Naive thymus-derived CD4-positive, alpha-beta T cell (primary cell): ENCODE measurements at regions of chr1 and their contacts with region 1.

Region 1: GRCh38 chr1:162056043-162056442 is 13.4 kb upstream of the NOS1AP start:
- DNase-seq: peak in 7 of 9 donors; percentile 12 to 44 (median 35)
- ATAC-seq: peak; percentile 87
- H3K4me3 ChIP-seq: no peak overlapping the region
- H3K4me3 Mint-ChIP-seq: no peak overlapping the region
- H3K27ac ChIP-seq: no peak overlapping the region
- H3K27ac Mint-ChIP-seq: no peak overlapping the region
- H3K4me1 ChIP-seq: no peaks in the 10 kb centered on the region
- H3K4me1 Mint-ChIP-seq: no peaks in the 10 kb centered on the region
- H3K27me3 ChIP-seq: no peaks in the 10 kb centered on the region
- H3K27me3 Mint-ChIP-seq: peaks cover 7 to 22% (median 14%) of the 10 kb centered on the region in 5 donors

Region 2: DNA sequence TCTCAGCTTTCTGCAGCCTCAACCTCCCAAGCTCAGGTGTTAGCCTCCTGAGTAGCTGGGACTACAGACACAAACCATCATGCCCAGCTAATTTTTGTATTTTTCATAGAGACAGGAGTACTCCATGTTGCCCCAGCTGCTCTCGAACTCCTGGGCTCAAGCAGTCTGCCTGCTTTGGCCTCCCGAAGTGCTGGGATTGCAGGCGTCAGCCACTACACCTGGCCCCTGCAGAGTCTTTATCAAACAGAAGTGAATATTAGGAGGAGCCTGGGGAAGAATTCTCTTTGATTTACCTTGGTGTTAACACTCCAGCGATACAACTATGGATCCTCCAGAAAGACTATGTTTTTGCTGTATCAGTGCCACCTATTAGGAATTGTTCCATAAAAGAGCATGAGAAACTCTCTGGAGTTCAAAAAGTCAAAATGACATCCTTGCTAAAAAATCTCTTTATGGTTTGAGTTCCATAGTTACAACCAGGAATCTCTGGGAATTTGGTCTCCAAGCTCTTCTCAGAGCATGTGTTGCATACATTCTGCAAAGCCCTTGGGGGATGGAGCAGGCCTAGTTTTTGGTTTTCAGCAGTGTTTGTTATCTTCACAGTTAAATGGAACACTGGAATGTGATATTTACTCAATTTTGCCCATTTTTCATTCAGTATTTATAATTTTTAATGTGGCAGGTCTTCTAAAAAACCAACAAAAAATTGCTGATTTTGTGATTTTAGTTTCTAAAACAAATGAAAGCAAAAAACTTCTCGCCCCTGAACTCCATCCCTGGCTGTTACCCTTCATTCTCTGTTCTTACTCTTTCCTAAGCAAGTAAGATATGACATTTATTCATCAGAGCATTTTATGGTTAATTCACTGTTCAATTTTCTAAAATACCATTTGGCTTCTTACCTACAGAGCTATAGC is 109.7 kb before region 1 on chr1:
- CTCF ChIA-PET with region 1: no interaction called
- POLR2A ChIA-PET with region 1: no interaction called
- intact Hi-C with region 1: no loop called
- DNase-seq: no peak
- ATAC-seq: no peak
- H3K4me3 ChIP-seq: no peak overlapping the region
- H3K4me3 Mint-ChIP-seq: no peak overlapping the region
- H3K27ac ChIP-seq: no peak overlapping the region
- H3K27ac Mint-ChIP-seq: no peak overlapping the region
- H3K4me1 ChIP-seq: no peaks in the 10 kb centered on the region
- H3K4me1 Mint-ChIP-seq: peaks cover 0 to 55% (median 23%) of the 10 kb centered on the region in 7 donors
- H3K27me3 ChIP-seq: no peaks in the 10 kb centered on the region
- H3K27me3 Mint-ChIP-seq: no peaks in the 10 kb centered on the region

Region 3: GRCh38 chr1:162276493-162276892 is 220.4 kb after region 1 on chr1:
- CTCF ChIA-PET with region 1: no interaction called
- POLR2A ChIA-PET with region 1: no interaction called
- intact Hi-C with region 1: loop called (anchors 1 to 2 kb)
- DNase-seq: no peak
- ATAC-seq: no peak
- H3K4me3 ChIP-seq: no peak overlapping the region
- H3K4me3 Mint-ChIP-seq: no peak overlapping the region
- H3K27ac ChIP-seq: no peak overlapping the region
- H3K27ac Mint-ChIP-seq: no peak overlapping the region
- H3K4me1 ChIP-seq: no peaks in the 10 kb centered on the region
- H3K4me1 Mint-ChIP-seq: no peaks in the 10 kb centered on the region
- H3K27me3 ChIP-seq: peaks cover 0 to 5% of the 10 kb centered on the region in 2 donors
- H3K27me3 Mint-ChIP-seq: peaks cover 12 to 46% (median 21%) of the 10 kb centered on the region in 5 donors

Region 4: DNA sequence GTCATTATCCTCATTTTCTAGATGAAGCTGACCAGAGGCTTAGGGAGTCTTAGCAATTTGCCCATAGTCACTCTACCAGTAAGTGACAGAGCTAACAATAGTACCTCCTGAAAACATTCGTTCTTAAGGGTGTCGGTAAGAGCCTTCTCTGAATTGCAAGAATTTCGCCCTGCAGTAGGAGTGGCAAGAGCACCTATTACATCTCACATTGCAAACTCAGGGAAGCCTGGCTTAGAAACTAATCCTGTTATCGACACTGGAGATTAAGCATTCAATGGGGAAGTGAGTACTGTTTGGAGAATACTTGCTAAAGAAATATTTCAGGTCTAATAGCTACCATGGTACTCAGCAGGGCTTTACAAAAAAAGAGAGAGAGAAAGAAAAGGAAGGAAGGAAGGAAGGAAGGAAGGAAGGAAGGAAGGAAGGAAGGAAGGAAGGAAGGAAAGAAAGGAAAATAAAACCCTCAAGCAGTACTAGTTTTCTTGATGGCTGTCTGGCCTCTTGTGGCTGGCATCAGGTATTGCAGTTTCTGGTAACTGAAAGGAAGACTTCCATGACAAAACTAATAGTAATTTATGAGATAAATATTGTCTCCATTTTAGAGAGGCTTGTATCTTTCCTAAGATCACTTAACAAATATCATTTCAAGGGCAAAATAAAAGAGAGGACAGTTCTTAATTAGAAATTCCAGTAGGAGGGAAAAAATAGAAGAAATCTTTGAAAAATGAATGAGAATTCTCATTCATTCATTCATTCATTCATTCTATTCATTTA is 335.9 kb after region 1 on chr1:
- CTCF ChIA-PET with region 1: interaction called, 6 read pairs
- POLR2A ChIA-PET with region 1: no interaction called
- intact Hi-C with region 1: loop called in 1 of 2 experiments (anchors 1 kb)
- DNase-seq: peak in 1 of 9 donors; percentile 9
- ATAC-seq: no peak
- H3K4me3 ChIP-seq: no peak overlapping the region
- H3K4me3 Mint-ChIP-seq: no peak overlapping the region
- H3K27ac ChIP-seq: no peak overlapping the region
- H3K27ac Mint-ChIP-seq: no peak overlapping the region
- H3K4me1 ChIP-seq: no peaks in the 10 kb centered on the region
- H3K4me1 Mint-ChIP-seq: peaks cover 0 to 19% (median 1%) of the 10 kb centered on the region in 7 donors
- H3K27me3 ChIP-seq: no peaks in the 10 kb centered on the region
- H3K27me3 Mint-ChIP-seq: peaks cover 11 to 30% (median 22%) of the 10 kb centered on the region in 5 donors

Region 5: DNA sequence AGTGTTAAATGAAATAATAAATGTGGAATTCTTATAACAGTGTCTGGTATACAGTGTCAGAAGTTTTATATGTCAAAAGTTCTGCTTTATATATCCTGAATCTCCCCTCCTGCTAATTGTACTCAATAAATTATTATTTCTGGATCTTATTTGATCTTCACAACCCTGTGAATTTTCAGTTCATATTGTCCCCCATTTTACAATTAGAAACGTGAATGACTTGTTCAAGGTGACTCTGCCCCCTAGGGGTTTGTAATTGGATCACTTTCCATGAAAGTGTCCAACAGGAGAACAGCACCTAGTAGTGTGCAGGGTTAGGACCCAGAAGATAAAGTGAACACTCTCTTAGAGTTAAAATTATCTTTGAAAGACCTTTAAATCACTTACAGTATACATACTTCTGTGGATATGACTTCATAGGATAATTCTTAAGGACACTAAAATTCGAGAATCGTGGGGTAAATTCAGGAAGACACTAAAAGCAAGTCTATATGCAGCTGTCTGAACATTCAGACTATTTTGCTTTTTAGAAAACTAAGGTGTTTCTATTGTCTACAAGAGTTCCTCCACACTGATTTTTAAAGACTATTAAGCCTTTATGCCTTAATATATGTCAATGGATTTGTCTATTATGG is 571.7 kb after region 1 on chr1:
- CTCF ChIA-PET with region 1: no interaction called
- POLR2A ChIA-PET with region 1: no interaction called
- intact Hi-C with region 1: loop called in 1 of 2 experiments (anchors 5 kb)
- DNase-seq: peak in 3 of 9 donors; percentile 1 to 8 (median 3)
- ATAC-seq: no peak
- H3K4me3 ChIP-seq: no peak overlapping the region
- H3K4me3 Mint-ChIP-seq: no peak overlapping the region
- H3K27ac ChIP-seq: no peak overlapping the region
- H3K27ac Mint-ChIP-seq: no peak overlapping the region
- H3K4me1 ChIP-seq: no peaks in the 10 kb centered on the region
- H3K4me1 Mint-ChIP-seq: peaks cover 0 to 2% (median 0%) of the 10 kb centered on the region in 7 donors
- H3K27me3 ChIP-seq: no peaks in the 10 kb centered on the region
- H3K27me3 Mint-ChIP-seq: peaks cover 7 to 29% (median 24%) of the 10 kb centered on the region in 5 donors

Region 6: DNA sequence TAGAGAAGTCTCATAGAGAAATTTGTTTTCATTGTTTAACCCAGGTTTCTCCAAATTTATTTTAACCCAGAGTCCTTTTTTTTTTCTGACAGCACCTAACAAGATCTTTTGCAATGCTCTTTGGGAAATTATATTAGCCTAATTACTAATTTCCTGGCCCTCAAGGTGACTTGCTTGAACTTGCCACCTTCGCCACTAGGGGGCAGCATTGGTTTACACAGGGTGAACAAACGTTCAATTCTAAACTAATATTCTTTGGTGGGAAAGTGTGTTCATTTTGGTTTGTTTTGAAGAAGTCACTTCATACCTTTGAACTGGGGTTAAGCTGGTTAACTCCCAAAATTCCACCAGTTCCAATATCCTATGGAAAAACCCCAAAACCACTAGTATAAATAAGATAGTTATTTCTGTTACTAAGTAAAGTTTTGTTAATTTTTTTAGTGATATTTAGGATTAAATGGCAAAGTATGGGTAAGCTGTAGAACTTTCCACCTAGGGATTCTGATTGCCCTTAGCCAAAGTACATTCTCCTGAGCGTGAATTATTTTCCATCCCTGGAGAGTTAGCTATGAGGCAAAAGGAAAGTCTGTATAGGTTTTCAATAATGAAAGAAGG is 791.9 kb after region 1 on chr1:
- CTCF ChIA-PET with region 1: no interaction called
- POLR2A ChIA-PET with region 1: no interaction called
- intact Hi-C with region 1: loop called in 1 of 2 experiments (anchors 1 kb)
- DNase-seq: peak; percentile 27 to 77 (median 65)
- ATAC-seq: peak; percentile 58
- H3K4me3 ChIP-seq: no peak overlapping the region
- H3K4me3 Mint-ChIP-seq: no peak overlapping the region
- H3K27ac ChIP-seq: no peak overlapping the region
- H3K27ac Mint-ChIP-seq: no peak overlapping the region
- H3K4me1 ChIP-seq: no peaks in the 10 kb centered on the region
- H3K4me1 Mint-ChIP-seq: no peaks in the 10 kb centered on the region
- H3K27me3 ChIP-seq: no peaks in the 10 kb centered on the region
- H3K27me3 Mint-ChIP-seq: peaks cover 4 to 34% (median 15%) of the 10 kb centered on the region in 5 donors

Region 7: GRCh38 chr1:163174524-163175437 is 1118.7 kb after region 1 on chr1:
- CTCF ChIA-PET with region 1: no interaction called
- POLR2A ChIA-PET with region 1: no interaction called
- intact Hi-C with region 1: loop called in 1 of 2 experiments (anchors 10 kb)
- DNase-seq: peak in 6 of 9 donors; percentile 3 to 34 (median 10)
- ATAC-seq: no peak
- H3K4me3 ChIP-seq: no peak overlapping the region
- H3K4me3 Mint-ChIP-seq: no peak overlapping the region
- H3K27ac ChIP-seq: no peak overlapping the region
- H3K27ac Mint-ChIP-seq: no peak overlapping the region
- H3K4me1 ChIP-seq: no peaks in the 10 kb centered on the region
- H3K4me1 Mint-ChIP-seq: no peaks in the 10 kb centered on the region
- H3K27me3 ChIP-seq: no peaks in the 10 kb centered on the region
- H3K27me3 Mint-ChIP-seq: peaks cover 0 to 13% (median 4%) of the 10 kb centered on the region in 5 donors

Region 8: GRCh38 chr1:163315773-163316374 is 1259.8 kb after region 1 on chr1:
- CTCF ChIA-PET with region 1: no interaction called
- POLR2A ChIA-PET with region 1: no interaction called
- intact Hi-C with region 1: loop called (anchors 2 to 10 kb)
- DNase-seq: peak in 7 of 9 donors; percentile 18 to 52 (median 35)
- ATAC-seq: peak; percentile 45
- H3K4me3 ChIP-seq: no peak overlapping the region
- H3K4me3 Mint-ChIP-seq: no peak overlapping the region
- H3K27ac ChIP-seq: no peak overlapping the region
- H3K27ac Mint-ChIP-seq: no peak overlapping the region
- H3K4me1 ChIP-seq: peaks cover 1 to 4% of the 10 kb centered on the region in 2 donors
- H3K4me1 Mint-ChIP-seq: peaks cover 2 to 6% (median 3%) of the 10 kb centered on the region in 7 donors
- H3K27me3 ChIP-seq: no peaks in the 10 kb centered on the region
- H3K27me3 Mint-ChIP-seq: no peaks in the 10 kb centered on the region